Vagina (tissue), 2 donors: ENCODE measurements at regions of chr6 and their contacts with region 1.

Region 1: GRCh38 chr6:39088331-39088730 is 26.7 kb downstream of the SAYSD1 start:
- DNase-seq: peak in 1 of 2 donors; percentile 67
- H3K4me3 ChIP-seq: no peak overlapping the region
- H3K27ac ChIP-seq: no peak overlapping the region
- H3K4me1 ChIP-seq: no peaks in the 10 kb centered on the region
- H3K27me3 ChIP-seq: no peaks in the 10 kb centered on the region
- CTCF ChIP-seq: no peak
- POLR2A ChIP-seq: no peak

Region 2: GRCh38 chr6:39102071-39102820 is 13.9 kb after region 1 on chr6:
- intact Hi-C with region 1: no loop called
- DNase-seq: no peak
- H3K4me3 ChIP-seq: no peak overlapping the region
- H3K27ac ChIP-seq: no peak overlapping the region
- H3K4me1 ChIP-seq: no peaks in the 10 kb centered on the region
- H3K27me3 ChIP-seq: no peaks in the 10 kb centered on the region
- CTCF ChIP-seq: no peak
- POLR2A ChIP-seq: no peak

Region 3: DNA sequence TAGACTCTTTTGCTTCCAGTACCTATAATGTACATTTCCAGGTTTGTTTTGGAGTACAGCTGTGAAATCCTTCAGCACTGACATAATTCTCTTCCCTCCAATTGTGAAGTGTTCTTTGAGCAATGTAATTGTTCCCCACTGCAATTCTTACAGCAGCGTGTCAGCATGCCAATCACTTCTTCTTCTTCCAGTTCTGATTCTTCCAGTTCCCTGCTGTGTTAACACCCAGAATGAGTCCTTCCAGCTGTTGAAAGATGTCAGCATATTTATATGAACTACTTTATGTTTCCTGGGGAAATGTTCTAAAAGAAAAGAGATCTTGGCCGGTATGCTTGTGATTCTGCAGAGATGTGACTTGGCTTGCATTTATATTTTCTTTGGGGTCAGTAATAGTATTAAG is 1736.8 kb after region 1 on chr6:
- intact Hi-C with region 1: loop called (anchors 5 kb)
- DNase-seq: no peak
- H3K4me3 ChIP-seq: no peak overlapping the region
- H3K27ac ChIP-seq: no peak overlapping the region
- H3K4me1 ChIP-seq: no peaks in the 10 kb centered on the region
- H3K27me3 ChIP-seq: no peaks in the 10 kb centered on the region
- CTCF ChIP-seq: no peak
- POLR2A ChIP-seq: no peak